Activated CD4-positive, alpha-beta memory T cell treated with anti-CD3 and anti-CD28 coated beads for 36 hours (primary cell): ENCODE measurements at regions of chr1 and their contacts with region 1.

Region 1: DNA sequence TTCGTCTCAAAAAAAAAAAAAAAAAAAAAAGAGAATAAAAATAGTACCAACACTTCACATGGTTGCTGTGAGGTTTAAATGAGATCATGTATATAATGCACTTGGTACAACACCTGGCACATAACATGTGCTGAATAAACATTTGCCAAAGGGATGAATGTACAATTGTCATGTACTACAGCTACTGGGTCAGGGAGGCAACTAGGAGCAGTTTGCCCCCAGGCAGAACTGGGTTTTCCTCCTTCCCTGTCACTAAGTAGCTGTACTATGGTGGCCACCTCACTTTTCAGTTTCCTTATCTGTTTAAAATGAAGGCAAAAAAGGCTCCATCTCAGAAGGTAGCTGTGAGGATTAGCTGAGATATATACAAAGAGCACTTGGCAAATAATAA is 11.5 kb downstream of the AK2 start:
- DNase-seq: no peak
- H3K4me3 Mint-ChIP-seq: no peak overlapping the region
- H3K27ac Mint-ChIP-seq: peak overlapping the region; percentile 83
- H3K4me1 Mint-ChIP-seq: peaks cover 63% of the 10 kb centered on the region
- H3K27me3 Mint-ChIP-seq: no peaks in the 10 kb centered on the region

Region 2: DNA sequence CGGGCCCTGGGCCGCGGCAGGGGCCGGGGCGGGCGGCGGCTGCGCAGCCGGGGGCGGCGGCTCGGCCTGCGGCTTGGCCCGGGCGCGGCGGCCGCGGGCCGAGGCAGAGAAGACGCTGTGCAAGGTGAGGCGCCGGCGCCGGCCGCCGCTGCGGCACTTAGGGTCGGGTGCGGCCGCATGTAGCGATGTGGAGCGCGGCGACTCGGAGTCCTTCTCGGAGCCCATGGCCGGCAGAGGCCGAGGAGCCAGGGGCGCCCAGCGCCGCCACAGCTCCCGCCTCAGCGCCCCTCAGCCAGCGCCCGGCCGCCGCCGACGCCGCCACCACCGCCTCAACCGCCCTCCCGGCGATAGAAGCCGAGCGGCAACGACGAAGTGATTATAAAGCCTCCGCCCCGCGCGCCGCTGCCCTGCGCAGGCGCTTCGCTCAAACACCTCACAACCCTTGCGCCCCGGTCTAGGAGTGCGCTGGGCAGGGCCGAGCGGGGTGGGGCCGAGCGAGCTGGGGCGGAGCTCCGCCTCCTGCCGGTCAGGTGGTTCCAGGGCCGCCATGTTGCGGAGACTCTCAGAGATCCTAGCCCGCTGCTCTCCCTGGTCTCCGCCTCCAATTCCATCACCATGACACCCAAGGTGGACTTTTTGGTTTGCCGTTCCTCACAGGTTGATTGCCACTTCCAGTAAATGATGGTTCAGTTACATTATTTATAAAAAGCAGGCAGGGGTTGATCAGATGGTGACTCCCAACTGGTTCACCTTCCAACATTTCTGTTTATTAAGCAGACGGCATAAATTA is 60.5 kb before region 1 on chr1 and contains the start of gene RNF19B:
- CTCF ChIA-PET with region 1: no interaction called
- POLR2A ChIA-PET with region 1: interaction called, 13 read pairs
- intact Hi-C with region 1: loop called (anchors 2 kb)
- DNase-seq: peak; percentile 98
- H3K4me3 Mint-ChIP-seq: peak within 1 kb of the TSS; percentile 83
- H3K27ac Mint-ChIP-seq: peak within 1 kb of the TSS; percentile 80
- H3K4me1 Mint-ChIP-seq: peaks cover 61% of the 10 kb centered on the region
- H3K27me3 Mint-ChIP-seq: no peaks in the 10 kb centered on the region
- total RNA-seq, gene RNF19B: 72.4 to 72.8 TPM

Region 3: DNA sequence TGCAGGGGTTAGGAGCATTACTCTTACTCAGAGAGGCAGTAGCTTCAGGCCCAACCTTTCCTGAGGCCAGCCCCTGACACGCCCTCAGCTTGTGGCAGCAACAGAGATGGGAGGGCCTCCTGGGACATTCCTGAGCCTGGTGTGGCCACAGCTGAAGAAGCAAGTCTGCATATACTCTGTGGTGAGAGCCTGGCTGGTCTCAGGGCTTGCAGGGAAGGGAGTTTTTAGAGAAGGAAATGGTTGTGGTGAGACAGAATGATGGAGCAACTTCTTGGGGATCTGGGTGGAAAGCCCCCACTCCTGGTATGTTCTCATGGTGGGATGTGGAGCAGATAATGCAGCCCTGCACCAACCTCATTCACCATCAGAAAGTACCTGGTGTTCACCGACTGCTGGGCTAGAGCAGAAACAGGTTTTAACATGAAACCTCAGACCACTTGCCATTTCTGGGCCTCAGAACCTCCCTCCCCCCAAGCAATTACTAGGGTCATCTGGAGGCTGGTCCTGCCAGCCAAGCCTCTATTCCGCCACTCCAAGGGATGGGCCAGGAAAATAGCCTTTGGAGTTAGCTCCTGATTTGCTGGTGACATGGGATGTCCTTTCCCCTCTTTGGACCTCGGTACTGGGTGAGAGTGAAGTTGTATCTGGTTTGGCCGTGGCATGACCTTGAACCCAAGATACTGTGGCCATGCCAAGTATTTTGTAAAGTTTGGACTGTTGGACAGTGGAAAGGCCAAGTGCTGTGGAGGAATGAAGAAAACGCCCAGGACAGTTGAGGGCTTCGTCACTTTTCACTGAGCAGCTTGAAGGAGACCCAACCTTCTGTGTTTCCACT is 32.5 kb before region 1 on chr1:
- CTCF ChIA-PET with region 1: interaction called, 6 read pairs
- POLR2A ChIA-PET with region 1: no interaction called
- intact Hi-C with region 1: loop called (anchors 1 kb)
- DNase-seq: peak; percentile 91
- H3K4me3 Mint-ChIP-seq: peak overlapping the region; percentile 32
- H3K27ac Mint-ChIP-seq: peak overlapping the region; percentile 93
- H3K4me1 Mint-ChIP-seq: peaks cover 62% of the 10 kb centered on the region
- H3K27me3 Mint-ChIP-seq: no peaks in the 10 kb centered on the region

Region 4: DNA sequence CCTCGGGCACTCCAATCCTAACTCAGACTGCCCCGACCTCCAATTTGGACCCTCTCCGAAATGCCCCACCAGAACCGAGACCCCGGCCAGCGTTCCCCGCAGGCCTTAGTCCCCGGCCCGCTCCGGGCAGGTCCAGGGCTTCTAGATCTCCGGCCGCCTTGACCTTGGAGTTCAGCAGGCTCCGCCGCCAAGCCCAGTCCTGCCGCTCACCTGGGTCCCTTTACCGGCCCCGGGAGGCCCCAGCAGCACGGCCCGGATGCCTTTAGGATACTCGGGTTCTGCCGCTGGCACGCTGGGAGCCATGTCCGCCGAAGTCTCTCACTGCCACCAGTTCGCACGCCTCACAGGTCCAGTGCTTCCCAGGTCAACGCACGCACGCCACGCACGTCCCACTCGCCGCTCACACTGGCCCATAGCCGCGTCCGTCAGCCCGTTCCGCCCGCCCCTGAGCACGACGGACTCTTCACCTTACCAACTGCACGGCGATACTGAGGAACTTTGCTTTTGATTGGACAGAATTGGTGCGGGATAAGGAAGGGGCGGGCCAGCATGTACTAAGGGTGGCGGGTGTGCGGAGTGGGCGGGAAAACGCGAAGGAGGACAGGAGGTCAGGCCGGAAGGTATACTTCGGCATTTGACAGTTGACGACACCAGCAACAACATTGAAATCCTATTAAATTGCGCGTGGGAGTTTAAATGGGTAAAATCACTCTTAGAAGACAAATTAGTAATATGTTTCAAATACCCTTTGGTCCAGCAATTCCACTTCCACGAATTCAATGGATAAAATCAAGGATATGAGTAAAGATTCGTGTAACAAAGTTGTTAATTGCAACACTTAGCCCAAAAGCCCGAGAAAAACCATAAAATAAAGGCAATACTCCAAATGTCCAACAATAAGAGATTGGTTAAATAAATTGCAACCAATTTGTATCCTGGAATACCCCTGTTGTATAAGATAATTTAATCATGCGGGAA is 11.6 kb after region 1 on chr1 and contains the start of gene AK2:
- CTCF ChIA-PET with region 1: interaction called, 6 read pairs
- POLR2A ChIA-PET with region 1: interaction called, 7 read pairs
- intact Hi-C with region 1: loop called (anchors 1 kb)
- DNase-seq: peak; percentile 96
- H3K4me3 Mint-ChIP-seq: peak within 1 kb of the TSS; percentile 83
- H3K27ac Mint-ChIP-seq: peak within 1 kb of the TSS; percentile 88
- H3K4me1 Mint-ChIP-seq: peaks cover 40% of the 10 kb centered on the region
- H3K27me3 Mint-ChIP-seq: no peaks in the 10 kb centered on the region
- total RNA-seq, gene AK2: 325 to 328 TPM